ENCODE measurements at regions of chr13 and their contacts with region 1.

Region 1: GRCh38 chr13:25286969-25287961 is at the start of gene MTMR6:
- DNase-seq: peak; percentile 95
- ATAC-seq: peak; percentile 92
- H3K4me3 Mint-ChIP-seq: peak within 1 kb of the TSS; percentile 88
- H3K27ac Mint-ChIP-seq: peak within 1 kb of the TSS; percentile 95
- H3K4me1 Mint-ChIP-seq: peaks cover 38% of the 10 kb centered on the region
- H3K27me3 Mint-ChIP-seq: peaks cover 16% of the 10 kb centered on the region
- total RNA-seq, gene MTMR6: 18.4 to 20.0 TPM

Region 2: GRCh38 chr13:25276748-25277147 is 10.5 kb before region 1 on chr13:
- CTCF ChIA-PET with region 1: interaction called, 16 read pairs
- POLR2A ChIA-PET with region 1: interaction called, 3 read pairs
- DNase-seq: no peak
- ATAC-seq: peak; percentile 63
- H3K4me3 Mint-ChIP-seq: no peak overlapping the region
- H3K27ac Mint-ChIP-seq: no peak overlapping the region
- H3K4me1 Mint-ChIP-seq: peaks cover 33% of the 10 kb centered on the region
- H3K27me3 Mint-ChIP-seq: no peaks in the 10 kb centered on the region

Region 3: GRCh38 chr13:25301347-25302047 is 14.2 kb after region 1 on chr13 and contains the start of gene NUP58:
- CTCF ChIA-PET with region 1: interaction called, 19 read pairs
- POLR2A ChIA-PET with region 1: interaction called, 34 read pairs
- DNase-seq: peak; percentile 96
- ATAC-seq: peak; percentile 98
- H3K4me3 Mint-ChIP-seq: peak within 1 kb of the TSS; percentile 96
- H3K27ac Mint-ChIP-seq: peak within 1 kb of the TSS; percentile 95
- H3K4me1 Mint-ChIP-seq: peaks cover 43% of the 10 kb centered on the region
- H3K27me3 Mint-ChIP-seq: peaks cover 12% of the 10 kb centered on the region
- total RNA-seq, gene NUP58: 85.6 to 91.0 TPM